ENCODE measurements at regions of chr21 and their contacts with region 1.

Region 1: DNA sequence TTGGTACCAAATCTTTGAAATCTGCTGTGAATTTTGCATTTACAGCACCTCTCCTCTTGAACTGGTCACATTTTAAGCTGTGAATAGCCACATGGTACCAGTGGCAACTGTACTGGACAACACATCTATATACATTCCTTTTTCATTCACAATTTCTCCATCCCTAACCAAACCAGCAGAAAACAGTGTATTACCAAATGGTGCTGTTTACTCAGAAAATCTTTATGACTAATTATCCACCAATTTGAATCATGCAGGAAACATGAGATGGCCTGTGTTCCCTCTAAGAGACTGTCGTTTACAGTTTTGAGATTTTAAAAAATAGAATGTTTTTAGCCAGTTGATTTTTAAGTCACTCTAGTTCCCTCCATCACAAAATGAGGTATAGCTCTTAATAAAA is 17.6 kb upstream of the CCT8 start:
- DNase-seq: no peak
- ATAC-seq: no peak
- H3K4me3 ChIP-seq: no peak overlapping the region
- H3K27ac ChIP-seq: no peak overlapping the region
- H3K4me1 ChIP-seq: no peaks in the 10 kb centered on the region
- H3K27me3 ChIP-seq: no peaks in the 10 kb centered on the region
- CTCF ChIP-seq: no peak
- EP300 ChIP-seq: no peak
- POLR2A ChIP-seq: no peak
- RAD21 ChIP-seq: no peak

Region 2: DNA sequence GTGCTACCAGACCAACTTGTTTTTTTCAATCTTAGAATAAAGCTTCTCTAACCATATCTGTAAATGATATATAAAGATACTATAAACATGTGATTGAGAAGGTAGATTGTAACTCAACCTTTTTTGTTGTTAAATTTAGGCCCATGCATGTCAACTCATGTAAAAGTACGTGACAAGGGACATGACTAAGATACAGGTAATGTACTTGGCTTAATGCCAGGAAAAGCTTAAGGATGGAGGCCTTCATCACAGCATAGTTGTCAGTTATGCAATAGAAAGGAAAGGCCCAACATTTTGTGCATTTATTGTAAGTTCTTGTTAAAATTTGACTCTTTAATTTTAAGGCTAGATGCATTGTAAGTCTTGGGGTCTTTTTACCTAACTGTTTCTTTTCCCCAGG is 403.5 kb before region 1 on chr21:
- CTCF ChIA-PET with region 1: no interaction called
- POLR2A ChIA-PET with region 1: no interaction called
- RAD21 ChIA-PET with region 1: no interaction called
- SMC1A ChIA-PET with region 1: no interaction called
- in situ Hi-C with region 1: no loop called
- intact Hi-C with region 1: no loop called
- DNase-seq: no peak
- ATAC-seq: no peak
- H3K4me3 ChIP-seq: no peak overlapping the region
- H3K27ac ChIP-seq: no peak overlapping the region
- H3K4me1 ChIP-seq: no peaks in the 10 kb centered on the region
- H3K27me3 ChIP-seq: no peaks in the 10 kb centered on the region
- CTCF ChIP-seq: no peak
- EP300 ChIP-seq: no peak
- POLR2A ChIP-seq: no peak
- RAD21 ChIP-seq: no peak

Region 3: GRCh38 chr21:29104239-29104708 is 13.2 kb after region 1 on chr21:
- CTCF ChIA-PET with region 1: interaction called, 6 read pairs
- POLR2A ChIA-PET with region 1: no interaction called
- RAD21 ChIA-PET with region 1: interaction called, 4 read pairs
- SMC1A ChIA-PET with region 1: interaction called, 13 read pairs
- in situ Hi-C with region 1: no loop called
- intact Hi-C with region 1: no loop called
- DNase-seq: no peak
- ATAC-seq: peak; percentile 89
- H3K4me3 ChIP-seq: no peak overlapping the region
- H3K27ac ChIP-seq: 0 out of 2 replicates have a peak overlapping the region, but pooled peaks have one; percentile 4
- H3K4me1 ChIP-seq: peaks cover 13% of the 10 kb centered on the region
- H3K27me3 ChIP-seq: no peaks in the 10 kb centered on the region
- CTCF ChIP-seq: no peak; a peak in 1 of 6 replicates
- EP300 ChIP-seq: no peak
- POLR2A ChIP-seq: no peak
- RAD21 ChIP-seq: no peak

Region 4: DNA sequence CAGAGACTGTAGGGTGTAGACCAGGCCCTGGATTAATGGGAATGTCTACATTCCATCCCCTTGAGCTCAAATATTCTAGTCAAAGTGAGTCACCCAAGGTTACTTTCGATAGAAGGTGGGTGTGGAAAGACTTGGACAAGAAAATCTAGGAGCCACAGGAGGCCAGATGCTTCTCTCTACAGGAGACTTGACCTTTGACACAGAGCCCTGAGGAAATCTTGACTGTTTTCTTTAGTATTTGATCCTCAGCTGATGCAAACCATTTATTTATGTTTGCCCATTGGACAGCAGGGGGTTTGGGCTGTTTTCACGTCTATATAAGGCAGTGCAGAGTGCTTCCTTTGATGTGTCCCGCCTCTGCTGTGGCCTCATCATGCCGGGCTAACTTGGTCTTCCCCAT is 23.7 kb after region 1 on chr21:
- CTCF ChIA-PET with region 1: interaction called, 4 read pairs
- POLR2A ChIA-PET with region 1: no interaction called
- RAD21 ChIA-PET with region 1: interaction called, 4 read pairs
- SMC1A ChIA-PET with region 1: interaction called, 15 read pairs
- in situ Hi-C with region 1: no loop called
- intact Hi-C with region 1: no loop called
- DNase-seq: no peak
- ATAC-seq: no peak
- H3K4me3 ChIP-seq: no peak overlapping the region
- H3K27ac ChIP-seq: no peak overlapping the region
- H3K4me1 ChIP-seq: peaks cover 10% of the 10 kb centered on the region
- H3K27me3 ChIP-seq: no peaks in the 10 kb centered on the region
- CTCF ChIP-seq: no peak
- EP300 ChIP-seq: no peak
- POLR2A ChIP-seq: no peak
- RAD21 ChIP-seq: no peak

Region 5: GRCh38 chr21:29351691-29352090 is 260.7 kb after region 1 on chr21:
- CTCF ChIA-PET with region 1: interaction called, 14 read pairs
- POLR2A ChIA-PET with region 1: no interaction called
- RAD21 ChIA-PET with region 1: interaction called, 7 read pairs
- SMC1A ChIA-PET with region 1: interaction called, 7 read pairs
- in situ Hi-C with region 1: no loop called
- intact Hi-C with region 1: no loop called
- DNase-seq: no peak
- ATAC-seq: no peak
- H3K4me3 ChIP-seq: no peak overlapping the region
- H3K27ac ChIP-seq: no peak overlapping the region
- H3K4me1 ChIP-seq: peaks cover 16% of the 10 kb centered on the region
- H3K27me3 ChIP-seq: no peaks in the 10 kb centered on the region
- CTCF ChIP-seq: no peak
- EP300 ChIP-seq: no peak
- POLR2A ChIP-seq: no peak
- RAD21 ChIP-seq: no peak

Region 6: GRCh38 chr21:29477941-29478340 is 386.9 kb after region 1 on chr21:
- CTCF ChIA-PET with region 1: no interaction called
- POLR2A ChIA-PET with region 1: no interaction called
- RAD21 ChIA-PET with region 1: no interaction called
- SMC1A ChIA-PET with region 1: interaction called, 3 read pairs
- in situ Hi-C with region 1: no loop called
- intact Hi-C with region 1: loop called (anchors 10 kb)
- DNase-seq: no peak
- ATAC-seq: no peak
- H3K4me3 ChIP-seq: no peak overlapping the region
- H3K27ac ChIP-seq: no peak overlapping the region
- H3K4me1 ChIP-seq: no peaks in the 10 kb centered on the region
- H3K27me3 ChIP-seq: no peaks in the 10 kb centered on the region
- CTCF ChIP-seq: no peak
- EP300 ChIP-seq: no peak
- POLR2A ChIP-seq: no peak
- RAD21 ChIP-seq: no peak

Region 7: DNA sequence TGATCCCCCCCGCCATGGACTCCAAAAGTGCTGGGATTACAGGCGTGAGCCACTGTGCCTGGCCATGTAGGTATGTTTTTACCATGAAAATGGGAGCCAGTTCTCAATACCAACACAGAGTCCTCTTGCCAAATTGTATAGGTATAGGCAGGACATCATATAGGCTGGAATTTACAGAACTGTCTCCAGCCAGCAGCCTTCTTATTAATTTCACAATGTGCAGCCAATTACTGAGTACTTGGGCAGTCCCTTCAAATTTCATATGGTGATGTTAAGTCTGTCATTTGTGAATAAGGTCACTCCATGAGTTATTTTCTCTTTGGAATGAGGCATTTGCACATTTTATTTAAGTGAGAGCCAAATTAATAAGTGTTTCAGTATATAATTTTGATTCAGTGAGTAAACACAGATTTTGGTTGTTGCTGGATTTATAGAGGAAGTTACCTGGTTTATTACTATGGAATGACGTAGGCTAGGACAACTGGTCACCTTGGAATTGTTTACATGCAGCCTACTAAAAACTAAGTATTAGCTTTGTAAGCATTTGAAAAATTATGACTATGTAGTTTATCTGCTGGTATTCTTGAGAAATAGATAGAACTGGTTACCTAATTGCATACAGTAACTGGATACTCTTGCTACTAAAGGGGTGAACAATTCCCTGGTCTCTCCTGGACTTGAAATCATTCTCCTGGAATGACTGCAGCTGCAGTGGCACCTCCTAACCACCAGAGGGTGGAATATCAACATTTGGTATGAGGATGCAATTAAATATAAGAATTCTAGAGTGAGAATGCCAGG is 1249.6 kb after region 1 on chr21:
- CTCF ChIA-PET with region 1: no interaction called
- POLR2A ChIA-PET with region 1: no interaction called
- RAD21 ChIA-PET with region 1: no interaction called
- SMC1A ChIA-PET with region 1: no interaction called
- in situ Hi-C with region 1: no loop called
- intact Hi-C with region 1: no loop called
- DNase-seq: no peak
- ATAC-seq: no peak
- H3K4me3 ChIP-seq: no peak overlapping the region
- H3K27ac ChIP-seq: no peak overlapping the region
- H3K4me1 ChIP-seq: no peaks in the 10 kb centered on the region
- H3K27me3 ChIP-seq: no peaks in the 10 kb centered on the region
- CTCF ChIP-seq: peak; percentile 51 to 68 (median 51)
- EP300 ChIP-seq: no peak
- POLR2A ChIP-seq: no peak
- RAD21 ChIP-seq: peak; percentile 48